H1 (cell line): ENCODE measurements at regions of chr2 and their contacts with region 1.

Region 1: DNA sequence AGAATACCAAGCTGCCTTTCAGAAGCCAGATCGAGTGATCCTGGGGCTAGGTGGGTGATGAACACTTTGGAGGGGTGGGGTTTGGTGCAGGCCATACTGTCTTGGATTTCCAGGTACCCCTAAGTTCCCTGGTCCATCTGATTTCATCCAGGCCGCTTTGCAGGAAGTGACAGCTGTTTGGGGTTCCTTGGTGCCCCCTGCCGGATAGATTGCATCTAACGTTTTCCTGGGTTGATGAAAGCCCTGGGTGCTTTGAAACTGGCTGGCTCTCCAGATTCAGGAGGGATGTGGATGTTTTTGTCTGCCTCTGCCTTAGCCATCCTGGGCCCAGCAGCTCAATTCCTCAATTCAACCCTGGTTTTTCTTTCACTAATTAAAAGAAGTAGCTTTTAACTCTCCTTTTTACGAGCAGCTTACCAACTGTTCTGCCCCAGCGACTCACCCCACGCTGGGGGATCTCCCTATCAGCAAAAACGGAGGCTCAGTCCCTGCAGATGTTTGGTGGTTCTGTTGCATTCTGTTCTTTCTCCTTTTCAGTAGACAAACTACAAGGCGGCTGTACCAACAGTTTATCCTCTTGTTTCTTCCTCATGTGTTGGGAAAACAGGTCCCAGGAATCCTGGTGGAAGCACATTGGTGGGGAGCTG is 37.1 kb downstream of the ARHGEF4 start:
- DNase-seq: peak; percentile 41 to 85
- H3K4me3 ChIP-seq: no peak overlapping the region
- H3K27ac ChIP-seq: no peak overlapping the region
- H3K4me1 ChIP-seq: peaks cover 0 to 7% (median 3%) of the 10 kb centered on the region in 4 experiments; a peak in 2 of 7 replicates
- H3K27me3 ChIP-seq: no peaks in the 10 kb centered on the region
- CTCF ChIP-seq: peak; percentile 65 to 78 (median 77)
- EP300 ChIP-seq: no peak
- POLR2A ChIP-seq: no peak
- RAD21 ChIP-seq: peak; percentile 75 to 79

Region 2: GRCh38 chr2:130720036-130720435 is 153.8 kb before region 1 on chr2:
- CTCF ChIA-PET with region 1: no interaction called
- POLR2A ChIA-PET with region 1: no interaction called
- DNase-seq: no peak
- H3K4me3 ChIP-seq: no peak overlapping the region
- H3K27ac ChIP-seq: no peak overlapping the region
- H3K4me1 ChIP-seq: no peaks in the 10 kb centered on the region
- H3K27me3 ChIP-seq: no peaks in the 10 kb centered on the region; a peak in 1 of 7 replicates
- CTCF ChIP-seq: no peak
- EP300 ChIP-seq: no peak
- POLR2A ChIP-seq: no peak
- RAD21 ChIP-seq: no peak

Region 3: GRCh38 chr2:130797493-130798435 is 76.1 kb before region 1 on chr2:
- CTCF ChIA-PET with region 1: interaction called, 156 read pairs
- POLR2A ChIA-PET with region 1: no interaction called
- DNase-seq: peak; percentile 67 to 97
- H3K4me3 ChIP-seq: peak overlapping the region; percentile 33 to 73 (median 64)
- H3K27ac ChIP-seq: no peak overlapping the region
- H3K4me1 ChIP-seq: peaks cover 2 to 16% (median 7%) of the 10 kb centered on the region in 4 experiments; a peak in 6 of 7 replicates
- H3K27me3 ChIP-seq: peaks cover 0 to 15% (median 13%) of the 10 kb centered on the region in 4 experiments; a peak in 6 of 7 replicates
- CTCF ChIP-seq: peak; percentile 83 to 97 (median 88)
- EP300 ChIP-seq: no peak; a peak in 1 of 3 replicates
- POLR2A ChIP-seq: no peak
- RAD21 ChIP-seq: peak; percentile 88 to 96

Region 4: GRCh38 chr2:130824492-130825061 is 49.2 kb before region 1 on chr2:
- CTCF ChIA-PET with region 1: interaction called, 16 read pairs
- POLR2A ChIA-PET with region 1: no interaction called
- DNase-seq: peak in 1 of 2 experiments; percentile 41
- H3K4me3 ChIP-seq: no peak overlapping the region
- H3K27ac ChIP-seq: no peak overlapping the region
- H3K4me1 ChIP-seq: peaks cover 0 to 35% (median 13%) of the 10 kb centered on the region in 4 experiments; a peak in 6 of 7 replicates
- H3K27me3 ChIP-seq: no peaks in the 10 kb centered on the region
- CTCF ChIP-seq: peak in 1 of 3 experiments; percentile 3; a peak in 1 of 4 replicates
- EP300 ChIP-seq: no peak
- POLR2A ChIP-seq: no peak
- RAD21 ChIP-seq: no peak

Region 5: GRCh38 chr2:130850788-130851623 is 22.8 kb before region 1 on chr2:
- CTCF ChIA-PET with region 1: interaction called, 130 read pairs
- POLR2A ChIA-PET with region 1: no interaction called
- DNase-seq: no peak
- H3K4me3 ChIP-seq: no peak overlapping the region
- H3K27ac ChIP-seq: no peak overlapping the region
- H3K4me1 ChIP-seq: no peaks in the 10 kb centered on the region; a peak in 1 of 7 replicates
- H3K27me3 ChIP-seq: no peaks in the 10 kb centered on the region
- CTCF ChIP-seq: no peak
- EP300 ChIP-seq: no peak
- POLR2A ChIP-seq: no peak
- RAD21 ChIP-seq: no peak

Region 6: GRCh38 chr2:130884503-130884902 is 10.7 kb after region 1 on chr2:
- CTCF ChIA-PET with region 1: interaction called, 40 read pairs
- POLR2A ChIA-PET with region 1: no interaction called
- DNase-seq: no peak
- H3K4me3 ChIP-seq: no peak overlapping the region
- H3K27ac ChIP-seq: no peak overlapping the region
- H3K4me1 ChIP-seq: no peaks in the 10 kb centered on the region
- H3K27me3 ChIP-seq: no peaks in the 10 kb centered on the region
- CTCF ChIP-seq: no peak
- EP300 ChIP-seq: no peak
- POLR2A ChIP-seq: no peak
- RAD21 ChIP-seq: peak in 1 of 2 experiments; percentile 32; a peak in 3 of 4 replicates

Region 7: DNA sequence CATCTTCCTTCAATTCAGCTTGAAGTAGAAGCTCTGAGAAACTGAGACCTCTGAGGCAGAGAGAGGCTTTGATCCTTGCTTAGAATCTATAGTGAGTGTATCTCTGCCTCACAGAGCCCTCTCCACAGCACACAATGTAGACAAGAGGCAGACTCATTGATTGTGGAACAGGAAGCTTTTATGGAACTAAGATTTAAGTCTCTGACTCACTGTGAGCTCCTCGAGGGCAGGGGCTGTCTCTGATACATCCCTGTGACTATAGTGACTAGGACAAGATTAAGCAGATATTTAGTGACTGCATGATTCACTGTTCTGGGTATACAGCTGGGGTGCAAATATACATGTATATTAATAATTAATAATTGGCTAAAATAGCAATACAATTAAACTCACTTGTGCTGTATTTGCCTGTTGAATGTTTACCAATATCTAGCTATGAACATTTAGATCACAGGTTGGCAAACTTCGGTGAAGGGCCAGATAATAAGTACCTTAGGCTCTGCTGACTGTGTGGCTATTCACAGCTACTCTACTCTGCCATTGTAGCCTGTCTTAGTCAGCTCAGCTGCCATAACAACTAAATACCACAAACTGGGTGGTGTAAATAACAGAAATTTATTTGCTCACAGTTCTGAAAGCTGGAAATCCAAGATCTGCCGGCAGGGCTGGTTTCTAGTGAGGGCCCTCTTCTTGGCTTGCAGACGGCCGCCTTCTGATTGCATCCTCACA is 17.3 kb after region 1 on chr2:
- CTCF ChIA-PET with region 1: interaction called, 14 read pairs
- POLR2A ChIA-PET with region 1: no interaction called
- DNase-seq: no peak
- H3K4me3 ChIP-seq: no peak overlapping the region
- H3K27ac ChIP-seq: no peak overlapping the region; the same call in 1 of the 2 replicates
- H3K4me1 ChIP-seq: peaks cover 0 to 5% (median 0%) of the 10 kb centered on the region in 4 experiments; a peak in 1 of 7 replicates
- H3K27me3 ChIP-seq: no peaks in the 10 kb centered on the region
- CTCF ChIP-seq: no peak
- EP300 ChIP-seq: no peak
- POLR2A ChIP-seq: no peak
- RAD21 ChIP-seq: no peak

Region 8: DNA sequence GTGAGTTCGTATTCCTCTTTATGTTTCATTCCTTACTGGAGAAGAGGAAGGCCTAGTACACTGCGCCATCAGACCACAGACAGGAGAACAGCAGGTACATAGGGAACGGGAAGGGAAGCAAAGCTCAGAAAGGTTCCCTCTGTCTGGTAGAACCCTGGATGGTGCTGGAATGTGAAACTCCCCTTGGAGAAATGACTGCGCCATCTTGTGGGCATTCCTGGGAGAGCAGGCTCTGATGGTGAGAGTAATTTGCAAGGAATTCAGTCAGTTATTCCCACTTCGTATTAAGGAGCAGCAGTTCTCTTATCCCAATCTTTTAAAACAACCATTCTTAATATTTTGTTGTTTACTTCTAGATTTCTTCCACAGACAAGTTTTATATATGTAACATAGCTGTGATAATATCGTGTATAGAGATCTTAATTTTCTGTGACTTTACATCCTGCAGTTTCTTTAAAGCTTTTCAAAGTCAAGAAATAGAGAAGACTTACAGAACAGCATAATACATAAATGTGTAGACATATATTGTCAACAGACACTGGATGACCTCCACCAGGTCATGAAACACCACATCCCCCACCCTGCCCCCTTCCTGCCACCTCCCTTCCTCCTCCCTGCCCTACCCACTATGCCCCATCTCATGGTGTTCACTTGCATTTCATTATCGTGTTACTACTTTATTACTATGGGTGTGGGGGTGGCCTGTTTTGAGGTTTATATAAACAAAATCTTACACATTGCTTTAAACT is 46.8 kb after region 1 on chr2:
- CTCF ChIA-PET with region 1: interaction called, 15 read pairs
- POLR2A ChIA-PET with region 1: no interaction called
- DNase-seq: peak; percentile 74 to 96
- H3K4me3 ChIP-seq: no peak overlapping the region
- H3K27ac ChIP-seq: no peak overlapping the region
- H3K4me1 ChIP-seq: peaks cover 0 to 11% (median 0%) of the 10 kb centered on the region in 4 experiments; a peak in 4 of 7 replicates
- H3K27me3 ChIP-seq: peaks cover 0 to 6% (median 0%) of the 10 kb centered on the region in 4 experiments; a peak in 2 of 7 replicates
- CTCF ChIP-seq: peak; percentile 69 to 96 (median 89)
- EP300 ChIP-seq: peak in 1 of 2 experiments; percentile 16; a peak in 1 of 3 replicates
- POLR2A ChIP-seq: no peak
- RAD21 ChIP-seq: peak; percentile 84 to 87

Region 9: DNA sequence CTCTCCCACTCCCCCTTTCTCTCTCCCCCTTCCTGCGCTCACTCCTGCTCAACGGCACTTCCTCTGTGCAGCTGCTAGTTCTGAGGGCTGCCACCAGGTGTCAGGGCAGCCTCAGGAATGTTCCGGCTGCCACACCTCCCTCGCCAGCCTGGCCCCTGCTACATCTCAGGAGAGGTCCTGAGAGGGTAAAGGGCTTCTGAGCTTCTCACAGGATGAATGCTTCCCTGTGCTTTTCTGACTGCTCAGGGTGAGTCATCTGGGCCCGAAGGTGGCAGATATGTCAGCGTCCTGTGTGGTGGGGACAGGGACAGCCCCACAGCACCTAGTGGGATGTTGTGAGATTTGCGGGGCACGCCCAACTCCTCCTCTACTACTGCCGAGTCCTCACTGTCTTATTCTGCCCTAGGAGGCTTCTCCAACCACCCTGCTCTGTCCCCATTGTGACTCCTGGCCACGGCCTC is 280.3 kb after region 1 on chr2:
- CTCF ChIA-PET with region 1: no interaction called
- POLR2A ChIA-PET with region 1: no interaction called
- DNase-seq: peak in 1 of 2 experiments; percentile 71
- H3K4me3 ChIP-seq: no peak overlapping the region
- H3K27ac ChIP-seq: no peak overlapping the region
- H3K4me1 ChIP-seq: no peaks in the 10 kb centered on the region; a peak in 2 of 7 replicates
- H3K27me3 ChIP-seq: no peaks in the 10 kb centered on the region
- CTCF ChIP-seq: peak; percentile 91 to 96 (median 94)
- EP300 ChIP-seq: no peak
- POLR2A ChIP-seq: no peak
- RAD21 ChIP-seq: peak; percentile 99 to 100